Endothelial cell of umbilical vein (primary cell): ENCODE measurements at regions of chr6 and their contacts with region 1.

Region 1: DNA sequence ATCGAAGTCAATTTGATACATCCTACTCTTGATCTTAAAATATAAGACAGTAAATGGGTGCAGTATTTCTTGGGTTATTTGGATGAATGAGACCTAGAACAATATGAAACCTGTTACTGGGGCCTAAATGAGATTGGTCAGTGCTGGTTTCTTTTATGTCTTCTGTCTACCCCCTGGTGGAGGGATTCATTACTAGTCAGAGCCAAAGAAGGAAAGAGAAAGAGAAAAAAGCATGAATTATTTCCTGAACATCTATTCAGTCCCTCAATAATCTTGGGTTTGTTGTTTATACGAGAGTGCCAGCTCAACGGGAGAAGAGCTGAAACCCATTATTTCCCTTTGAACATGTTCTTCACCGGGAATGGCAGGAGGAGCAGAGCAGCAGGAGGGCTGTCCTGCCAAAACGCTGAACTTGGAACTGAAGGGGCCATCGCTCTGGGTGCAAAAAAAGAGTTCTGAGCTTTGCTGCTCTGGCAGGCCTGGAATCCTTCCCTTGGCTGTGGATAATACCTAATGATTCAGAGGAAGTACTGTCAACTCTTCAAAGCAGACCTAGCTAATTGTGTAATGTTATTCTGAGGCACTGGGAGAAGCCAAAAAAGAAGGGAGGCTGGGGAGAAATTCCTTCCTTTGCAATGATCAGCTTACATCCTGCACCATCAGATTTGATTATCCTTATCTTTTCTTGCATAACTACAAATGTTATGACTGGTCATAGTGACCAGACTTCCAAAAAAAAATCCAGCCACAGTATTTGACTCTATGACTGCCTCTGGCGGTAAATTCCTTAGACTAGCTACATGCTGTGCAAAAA is 72.0 kb downstream of the BLOC1S5 start:
- DNase-seq: peak; percentile 96
- H3K4me3 ChIP-seq: peak overlapping the region in 1 of 3 experiments; percentile 31
- H3K27ac ChIP-seq: peak overlapping the region; percentile 99
- H3K4me1 ChIP-seq: peaks cover 49% of the 10 kb centered on the region
- H3K27me3 ChIP-seq: no peaks in the 10 kb centered on the region
- CTCF ChIP-seq: peak; percentile 41 to 45
- POLR2A ChIP-seq: peak; percentile 70

Region 2: DNA sequence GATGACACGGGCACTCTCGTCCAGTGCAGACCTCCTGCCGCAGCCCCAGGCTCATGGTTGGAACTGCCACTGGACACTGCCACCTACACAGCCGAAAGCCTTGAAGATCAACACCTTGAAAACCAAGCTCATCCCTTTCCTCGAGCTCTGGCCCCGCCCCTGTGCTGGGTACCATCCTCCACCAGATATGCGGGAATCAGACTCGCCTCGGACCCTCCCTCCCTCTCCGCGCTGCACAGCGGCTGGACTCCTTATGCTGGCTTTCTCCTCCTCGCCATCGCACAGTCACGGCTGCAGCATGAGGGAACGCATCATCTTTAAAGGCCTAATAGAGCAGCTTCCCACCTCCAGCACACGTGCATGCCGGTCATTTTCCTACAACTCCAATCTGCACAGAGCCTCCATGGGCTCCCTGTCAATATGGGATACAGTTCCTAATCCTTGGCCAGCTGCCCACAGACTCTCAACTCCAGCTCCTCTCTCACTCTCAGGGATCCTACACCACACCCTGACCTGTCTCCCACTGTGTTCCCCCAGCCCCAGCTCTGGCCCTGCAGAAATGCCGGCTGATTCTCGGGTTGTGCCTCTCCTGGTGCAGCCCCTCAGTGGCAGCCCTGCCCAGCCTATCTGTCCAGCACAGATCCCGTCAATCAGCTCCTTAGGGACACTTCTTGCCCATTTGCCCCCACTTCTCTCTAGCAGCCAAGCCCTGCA is 104.8 kb before region 1 on chr6:
- CTCF ChIA-PET with region 1: interaction called, 78 read pairs
- POLR2A ChIA-PET with region 1: no interaction called
- dilution Hi-C with region 1: no loop called
- intact Hi-C with region 1: no loop called
- DNase-seq: peak; percentile 64
- H3K4me3 ChIP-seq: no peak overlapping the region
- H3K27ac ChIP-seq: peak overlapping the region; percentile 36
- H3K4me1 ChIP-seq: peaks cover 11% of the 10 kb centered on the region
- H3K27me3 ChIP-seq: no peaks in the 10 kb centered on the region
- CTCF ChIP-seq: no peak
- POLR2A ChIP-seq: peak; percentile 83

Region 3: GRCh38 chr6:7905416-7905815 is 86.8 kb before region 1 on chr6:
- CTCF ChIA-PET with region 1: interaction called, 78 read pairs
- POLR2A ChIA-PET with region 1: interaction called, 40 read pairs
- dilution Hi-C with region 1: no loop called
- intact Hi-C with region 1: loop called (anchors 1 kb)
- DNase-seq: peak; percentile 26
- H3K4me3 ChIP-seq: peak overlapping the region in 1 of 3 experiments; percentile 43
- H3K27ac ChIP-seq: peak overlapping the region; percentile 94
- H3K4me1 ChIP-seq: peaks cover 75% of the 10 kb centered on the region
- H3K27me3 ChIP-seq: no peaks in the 10 kb centered on the region
- CTCF ChIP-seq: no peak
- POLR2A ChIP-seq: no peak

Region 4: GRCh38 chr6:7954477-7955200 is 37.6 kb before region 1 on chr6:
- CTCF ChIA-PET with region 1: interaction called, 3 read pairs
- POLR2A ChIA-PET with region 1: no interaction called
- dilution Hi-C with region 1: no loop called
- intact Hi-C with region 1: loop called (anchors 2 kb)
- DNase-seq: peak; percentile 60
- H3K4me3 ChIP-seq: no peak overlapping the region
- H3K27ac ChIP-seq: no peak overlapping the region
- H3K4me1 ChIP-seq: peaks cover 27% of the 10 kb centered on the region
- H3K27me3 ChIP-seq: no peaks in the 10 kb centered on the region
- CTCF ChIP-seq: no peak
- POLR2A ChIP-seq: no peak

Region 5: GRCh38 chr6:8082954-8083858 is 91.0 kb after region 1 on chr6:
- CTCF ChIA-PET with region 1: no interaction called
- POLR2A ChIA-PET with region 1: no interaction called
- dilution Hi-C with region 1: no loop called
- intact Hi-C with region 1: loop called (anchors 1 kb)
- DNase-seq: peak; percentile 95
- H3K4me3 ChIP-seq: peak overlapping the region in 1 of 3 experiments; percentile 16
- H3K27ac ChIP-seq: peak overlapping the region; percentile 93
- H3K4me1 ChIP-seq: peaks cover 64% of the 10 kb centered on the region
- H3K27me3 ChIP-seq: no peaks in the 10 kb centered on the region
- CTCF ChIP-seq: no peak
- POLR2A ChIP-seq: no peak